ENCODE measurements at regions of chr17 and their contacts with region 1.

Region 1: DNA sequence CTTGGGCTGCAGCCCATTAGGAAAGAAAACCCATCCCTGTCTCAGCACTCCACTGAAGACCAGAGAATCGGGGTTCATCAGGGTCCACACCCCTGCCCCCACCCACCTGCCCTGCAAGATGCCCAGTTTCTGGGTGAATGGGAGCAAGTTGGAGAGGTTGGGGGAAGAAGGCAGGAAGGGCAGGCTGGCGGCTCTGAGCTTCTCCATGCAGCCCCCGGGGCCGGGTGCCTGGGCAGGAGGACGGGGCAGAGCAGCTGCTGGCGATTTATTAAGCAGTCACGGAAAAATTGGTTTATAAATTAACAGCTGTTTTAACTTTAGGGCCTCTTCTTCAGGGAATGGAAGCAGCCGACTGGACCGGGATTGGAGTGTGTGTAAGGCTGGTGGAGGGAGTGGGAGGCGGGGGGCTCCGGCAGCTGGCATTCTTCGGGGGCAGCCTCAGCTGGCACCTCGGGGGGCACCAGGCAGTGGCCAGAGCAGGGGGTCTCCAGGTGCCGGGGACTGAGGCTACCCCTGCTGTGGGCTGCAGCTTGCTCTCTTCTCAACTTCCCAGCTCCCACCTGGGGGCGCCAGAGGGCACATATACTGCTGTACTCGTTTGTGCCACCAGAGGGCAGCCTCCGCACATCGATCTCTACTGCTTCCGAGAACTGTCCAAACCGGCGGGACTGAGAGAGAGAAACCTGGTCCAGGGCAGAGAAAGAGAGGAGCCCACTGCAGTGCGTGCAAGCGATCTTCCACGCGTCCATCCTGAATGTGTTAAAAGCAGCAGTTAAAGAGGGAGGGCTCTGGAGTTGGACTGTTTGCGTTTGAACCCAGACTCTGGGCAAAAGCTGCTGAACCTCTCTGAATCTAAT is 5.0 kb upstream of the PPP1R1B start:
- H3K4me3 ChIP-seq: no peak overlapping the region
- H3K27ac ChIP-seq: no peak overlapping the region
- H3K4me1 ChIP-seq: peaks cover 4% of the 10 kb centered on the region
- CTCF ChIP-seq: peak; percentile 99

Region 2: DNA sequence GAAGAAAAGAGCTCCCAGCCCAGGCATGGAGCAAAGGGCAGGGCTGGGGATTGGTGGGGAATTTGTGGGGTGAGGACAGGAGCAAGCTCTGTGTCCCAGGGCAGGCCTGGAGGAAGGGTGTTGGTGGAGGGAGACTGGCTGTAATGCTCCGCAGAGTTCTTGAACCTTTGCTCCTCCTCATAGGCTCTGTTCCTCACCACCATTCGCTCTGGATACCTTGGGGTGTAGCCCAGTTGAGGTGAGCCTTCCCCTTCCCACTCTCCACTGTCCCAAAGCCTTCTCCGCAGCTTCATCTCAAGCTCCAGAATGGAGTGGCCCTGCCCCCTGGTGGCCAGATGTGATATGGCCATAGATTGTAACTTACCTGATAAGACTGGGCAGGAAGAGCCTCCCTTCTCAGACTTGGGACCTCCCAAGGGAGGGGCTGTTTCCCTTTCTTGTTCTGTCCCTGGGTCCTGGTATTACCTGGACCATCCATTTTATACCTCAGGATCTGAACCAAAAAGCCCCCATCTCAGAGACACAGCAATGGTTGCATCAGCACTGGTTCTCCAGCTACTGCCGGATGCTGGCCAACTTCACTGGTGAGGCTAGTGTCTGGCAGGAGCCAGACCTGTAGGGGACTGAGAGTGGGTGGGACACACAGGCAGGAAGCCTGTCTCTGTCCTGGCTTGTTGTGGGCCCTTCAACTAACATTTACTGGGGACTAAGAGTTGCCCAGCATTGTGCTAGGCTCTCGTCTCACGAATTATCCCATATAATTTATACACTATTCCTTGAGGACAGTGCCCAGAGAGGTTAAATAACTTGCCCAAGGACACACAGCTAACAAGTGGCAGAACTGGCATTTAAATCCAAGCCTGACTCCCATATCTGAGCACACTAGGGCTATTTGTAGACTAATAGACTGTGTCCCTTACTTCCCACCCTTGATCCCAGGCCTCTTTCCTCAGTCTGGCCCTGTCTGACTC is 376.9 kb before region 1 on chr17:
- CTCF ChIA-PET with region 1: interaction called, 14 read pairs
- POLR2A ChIA-PET with region 1: no interaction called
- H3K4me3 ChIP-seq: no peak overlapping the region
- H3K27ac ChIP-seq: no peak overlapping the region
- H3K4me1 ChIP-seq: no peaks in the 10 kb centered on the region; the same call in 1 of the 2 replicates
- CTCF ChIP-seq: peak; percentile 91

Region 3: DNA sequence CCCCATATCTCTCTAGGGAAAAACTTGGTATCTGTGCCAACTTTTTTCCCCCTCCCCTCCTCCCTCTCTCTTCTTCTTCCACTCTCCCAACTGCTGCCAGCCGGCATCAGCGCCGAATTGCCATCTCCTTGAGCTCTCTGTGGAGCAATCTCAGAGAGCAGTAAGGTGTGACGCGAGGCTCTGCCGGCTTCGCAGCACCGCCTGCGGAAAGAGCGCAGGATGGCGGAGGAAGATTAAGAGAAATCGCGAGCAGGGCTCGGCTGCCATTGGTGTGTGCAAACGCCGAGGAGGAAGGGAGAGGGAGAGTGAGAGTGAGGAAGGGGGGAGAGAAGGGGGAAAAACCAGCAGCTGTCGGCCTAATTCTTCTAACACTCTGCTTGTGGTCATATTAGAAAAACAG is 58.3 kb before region 1 on chr17:
- CTCF ChIA-PET with region 1: interaction called, 475 read pairs
- POLR2A ChIA-PET with region 1: no interaction called
- H3K4me3 ChIP-seq: no peak overlapping the region
- H3K27ac ChIP-seq: no peak overlapping the region
- H3K4me1 ChIP-seq: no peaks in the 10 kb centered on the region
- CTCF ChIP-seq: no peak

Region 4: GRCh38 chr17:39605492-39606433 is 16.0 kb before region 1 on chr17:
- CTCF ChIA-PET with region 1: interaction called, 41 read pairs
- POLR2A ChIA-PET with region 1: interaction called, 3 read pairs
- H3K4me3 ChIP-seq: peak overlapping the region; percentile 15
- H3K27ac ChIP-seq: no peak overlapping the region
- H3K4me1 ChIP-seq: peaks cover 24% of the 10 kb centered on the region
- CTCF ChIP-seq: no peak

Region 5: DNA sequence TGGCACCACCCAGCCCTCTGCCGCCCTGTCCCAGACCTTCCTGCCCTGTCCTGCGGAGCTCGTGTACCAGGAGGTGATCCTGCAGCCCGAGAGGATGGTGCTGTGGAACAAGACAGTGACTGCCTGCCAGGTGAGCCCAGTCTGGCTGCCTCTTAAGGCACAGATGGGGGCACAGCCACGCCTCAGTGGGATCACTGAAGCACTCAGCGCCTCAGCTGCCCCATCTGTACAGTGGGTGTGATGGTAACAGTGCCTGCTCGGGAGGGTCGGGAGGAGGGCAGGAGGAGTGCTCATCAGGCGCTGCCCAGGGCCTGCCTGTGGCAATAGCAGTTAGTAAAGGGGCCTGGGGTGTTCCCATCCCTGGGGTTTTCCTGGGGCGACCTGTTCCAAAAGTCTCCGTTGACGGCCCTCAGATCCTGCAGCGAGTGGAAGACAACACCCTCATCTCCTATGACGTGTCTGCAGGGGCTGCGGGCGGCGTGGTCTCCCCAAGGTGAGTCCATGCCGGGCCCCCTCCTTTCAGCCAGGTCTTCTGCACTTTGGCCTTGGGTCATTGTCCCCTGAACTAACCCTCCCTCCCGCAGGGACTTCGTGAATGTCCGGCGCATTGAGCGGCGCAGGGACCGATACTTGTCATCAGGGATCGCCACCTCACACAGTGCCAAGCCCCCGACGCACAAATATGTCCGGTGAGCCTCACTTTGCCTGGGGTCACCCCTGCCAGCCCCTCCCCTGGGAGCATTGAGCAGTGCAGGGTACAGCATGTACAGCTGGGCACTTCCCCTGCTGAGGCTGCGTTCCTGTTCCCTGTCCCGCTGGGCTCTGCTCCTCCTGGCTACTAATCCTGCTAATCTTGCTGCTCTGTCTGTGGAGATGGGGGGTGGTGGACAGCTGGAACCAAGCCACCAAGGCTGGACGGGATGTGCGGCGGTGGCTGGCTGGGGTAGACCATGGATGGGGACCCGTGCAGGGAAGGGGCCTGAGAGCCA is 38.9 kb after region 1 on chr17:
- CTCF ChIA-PET with region 1: interaction called, 220 read pairs
- POLR2A ChIA-PET with region 1: no interaction called
- H3K4me3 ChIP-seq: no peak overlapping the region
- H3K27ac ChIP-seq: no peak overlapping the region
- H3K4me1 ChIP-seq: peaks cover 9% of the 10 kb centered on the region; the same call in 1 of the 2 replicates
- CTCF ChIP-seq: no peak

Region 6: GRCh38 chr17:39730095-39730921 is 108.6 kb after region 1 on chr17 and contains the start of gene MIEN1:
- CTCF ChIA-PET with region 1: interaction called, 35 read pairs
- POLR2A ChIA-PET with region 1: no interaction called
- H3K4me3 ChIP-seq: peak within 1 kb of the TSS; percentile 90
- H3K27ac ChIP-seq: peak within 1 kb of the TSS; percentile 61; the same call in 1 of the 2 replicates
- H3K4me1 ChIP-seq: 0 out of 2 replicates have a peak, but pooled peaks cover 3% of the 10 kb centered on the region
- CTCF ChIP-seq: peak; percentile 93

Measured in HEK293 (cell line).